ENCODE measurements at regions of chr2 and their contacts with region 1.

Region 1: DNA sequence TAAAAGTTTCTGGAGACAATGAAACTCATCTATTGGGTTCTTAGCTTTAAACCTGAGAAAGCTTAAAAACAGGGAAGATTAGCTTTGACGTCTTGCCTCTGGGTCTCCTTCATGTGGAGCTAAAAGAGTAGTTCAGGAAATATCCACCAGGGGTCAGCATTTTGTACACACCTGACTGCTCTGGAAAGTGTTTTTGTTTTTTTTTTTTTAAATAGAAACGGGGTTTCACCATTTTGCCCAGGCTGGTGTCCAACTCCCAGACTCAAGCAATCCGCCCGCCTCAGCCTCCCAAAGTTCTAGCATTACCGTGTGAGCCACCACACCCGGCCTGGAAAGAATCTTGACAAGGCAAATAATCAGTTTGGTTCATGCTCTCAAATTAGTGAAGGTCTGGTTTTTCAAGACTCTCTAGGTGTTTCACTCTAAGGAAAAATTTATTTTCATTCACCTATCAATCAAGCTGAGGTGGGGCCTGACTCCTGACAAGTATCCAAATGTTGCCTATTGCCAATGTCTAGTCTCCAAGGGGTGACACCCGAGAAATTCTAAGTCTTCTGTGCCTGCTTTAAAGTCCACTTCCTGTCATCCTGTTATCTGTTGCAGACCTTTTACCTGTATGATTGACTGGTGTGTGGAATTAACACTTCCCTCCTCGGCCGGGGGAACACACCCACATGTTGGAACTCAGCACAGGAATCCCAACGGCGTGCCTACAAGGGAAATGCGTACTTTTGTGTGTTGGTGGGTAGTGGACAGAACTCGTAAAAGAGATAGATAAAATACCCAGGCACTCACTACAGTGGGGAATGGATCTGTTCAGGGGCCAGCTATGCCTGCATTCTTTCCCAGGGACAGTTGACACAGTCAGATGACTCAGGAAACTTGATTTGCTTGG is 11.3 kb downstream of the IL1RN start:
- DNase-seq: peak; percentile 92
- H3K4me3 Mint-ChIP-seq: peak overlapping the region; percentile 34
- H3K27ac Mint-ChIP-seq: peak overlapping the region; percentile 61
- H3K4me1 Mint-ChIP-seq: peaks cover 34% of the 10 kb centered on the region
- H3K27me3 Mint-ChIP-seq: no peaks in the 10 kb centered on the region

Region 2: DNA sequence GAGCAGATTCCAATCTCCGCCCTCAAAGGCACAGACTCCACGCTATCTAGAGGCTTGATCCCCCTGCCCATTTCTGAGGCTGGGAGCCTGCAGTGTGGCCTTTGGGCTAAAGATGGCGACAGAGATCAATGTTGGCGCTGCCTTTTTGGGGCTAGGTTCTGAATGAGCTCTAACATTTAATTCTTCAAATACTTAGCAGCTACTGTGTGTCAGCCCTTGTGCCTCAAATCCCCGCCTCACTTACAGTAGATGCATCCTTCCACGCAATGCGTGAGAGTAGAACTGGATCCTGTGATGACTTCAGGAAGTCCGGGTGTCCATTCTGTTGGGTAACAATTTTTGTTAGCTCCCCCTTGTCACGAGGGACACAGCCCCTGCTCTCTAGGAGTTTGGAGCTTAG is 58.5 kb before region 1 on chr2:
- intact Hi-C with region 1: loop called (anchors 1 kb)
- DNase-seq: peak; percentile 88
- H3K4me3 Mint-ChIP-seq: no peak overlapping the region
- H3K27ac Mint-ChIP-seq: no peak overlapping the region
- H3K4me1 Mint-ChIP-seq: peaks cover 29% of the 10 kb centered on the region
- H3K27me3 Mint-ChIP-seq: peaks cover 15% of the 10 kb centered on the region

Region 3: DNA sequence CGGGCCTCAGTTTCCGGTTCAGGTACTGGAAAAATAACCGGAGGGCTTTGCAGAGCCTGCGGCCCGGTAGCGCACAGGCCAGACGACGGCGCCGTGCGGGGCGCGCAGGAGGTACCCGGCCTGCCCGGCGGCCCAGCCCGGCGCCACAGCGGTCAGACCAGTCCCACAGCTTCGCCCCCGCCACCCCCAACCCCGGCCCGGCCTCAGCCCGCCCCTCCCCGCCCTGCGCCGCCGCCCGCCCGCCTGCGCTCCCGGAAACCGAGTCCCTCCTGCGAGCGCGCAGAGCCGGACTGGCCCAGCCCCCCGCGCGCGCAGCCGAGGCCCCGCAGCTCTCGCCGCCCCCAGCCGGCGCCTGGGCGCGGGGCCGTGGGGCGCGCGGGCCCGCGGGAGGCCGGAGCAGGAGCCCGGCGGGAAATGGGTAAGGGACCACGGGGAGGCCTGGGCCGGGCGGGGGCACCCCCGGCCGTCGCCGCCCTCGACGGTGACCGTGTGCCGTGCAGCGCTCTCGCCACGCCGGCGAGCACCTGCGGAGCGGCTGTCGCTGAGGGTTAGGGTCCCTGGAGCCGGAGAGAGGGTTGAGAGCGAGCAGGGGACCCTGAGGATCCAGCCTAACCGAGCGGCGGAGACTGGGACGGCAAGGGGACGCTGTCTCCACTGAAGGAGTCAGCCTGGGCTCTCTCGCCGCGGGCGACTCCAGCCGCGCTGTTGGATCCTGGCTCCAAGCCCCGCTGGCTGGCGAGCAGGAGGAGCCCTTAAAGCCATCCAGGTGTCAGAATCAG is 18.6 kb after region 1 on chr2:
- intact Hi-C with region 1: loop called (anchors 2 kb)
- DNase-seq: peak; percentile 87
- H3K4me3 Mint-ChIP-seq: peak overlapping the region; percentile 86
- H3K27ac Mint-ChIP-seq: peak overlapping the region; percentile 87
- H3K4me1 Mint-ChIP-seq: peaks cover 19% of the 10 kb centered on the region
- H3K27me3 Mint-ChIP-seq: peaks cover 3% of the 10 kb centered on the region

Region 4: GRCh38 chr2:113198790-113199612 is 60.3 kb after region 1 on chr2:
- intact Hi-C with region 1: loop called (anchors 1 kb)
- DNase-seq: peak; percentile 94
- H3K4me3 Mint-ChIP-seq: no peak overlapping the region
- H3K27ac Mint-ChIP-seq: peak overlapping the region; percentile 82
- H3K4me1 Mint-ChIP-seq: peaks cover 38% of the 10 kb centered on the region
- H3K27me3 Mint-ChIP-seq: no peaks in the 10 kb centered on the region

Region 5: DNA sequence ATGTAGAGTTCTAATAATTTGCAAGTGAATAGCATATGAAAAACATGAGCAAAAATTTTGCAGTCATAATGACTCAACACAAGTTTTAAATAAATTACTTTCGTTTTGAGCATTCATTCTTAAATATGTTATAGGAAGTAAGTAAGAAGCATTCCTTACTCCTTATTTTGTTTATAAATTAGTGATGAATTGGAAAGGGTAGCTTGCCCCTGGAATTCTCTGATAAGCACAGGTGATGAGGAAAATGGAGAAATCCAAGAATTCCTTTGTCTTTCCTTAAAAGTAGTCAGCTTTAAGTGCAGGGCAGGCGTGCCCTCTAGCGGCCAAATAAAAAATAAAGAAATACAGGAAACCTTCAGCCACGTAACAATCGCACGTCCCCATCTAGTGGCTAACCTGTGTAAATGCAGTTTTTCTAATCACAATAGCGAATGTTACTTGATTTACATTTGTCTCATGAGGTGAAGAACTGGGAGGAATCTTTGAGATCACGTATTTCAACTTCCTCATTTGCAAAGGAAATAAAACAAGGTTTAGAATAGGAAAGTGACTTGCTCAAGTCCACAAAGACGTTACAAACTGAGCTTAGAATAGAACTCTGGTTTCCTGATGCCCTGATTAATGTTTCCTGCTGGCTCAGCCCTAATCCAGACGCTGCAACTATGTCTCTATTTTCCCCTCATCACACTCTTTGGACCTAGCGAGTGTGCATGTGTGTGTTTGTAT is 251.6 kb after region 1 on chr2:
- intact Hi-C with region 1: loop called (anchors 5 kb)
- DNase-seq: peak; percentile 88
- H3K4me3 Mint-ChIP-seq: peak overlapping the region; percentile 28
- H3K27ac Mint-ChIP-seq: peak overlapping the region; percentile 13
- H3K4me1 Mint-ChIP-seq: peaks cover 9% of the 10 kb centered on the region
- H3K27me3 Mint-ChIP-seq: peaks cover 30% of the 10 kb centered on the region

Measured in activated CD4-positive, alpha-beta T cell treated with anti-CD3 and anti-CD28 coated beads, Interleukin-2, amount 10 ng/mL, durations not matched to agents 24 days and 14 days (primary cell).